ENCODE measurements at regions of chr2 and their contacts with region 1.

Region 1: DNA sequence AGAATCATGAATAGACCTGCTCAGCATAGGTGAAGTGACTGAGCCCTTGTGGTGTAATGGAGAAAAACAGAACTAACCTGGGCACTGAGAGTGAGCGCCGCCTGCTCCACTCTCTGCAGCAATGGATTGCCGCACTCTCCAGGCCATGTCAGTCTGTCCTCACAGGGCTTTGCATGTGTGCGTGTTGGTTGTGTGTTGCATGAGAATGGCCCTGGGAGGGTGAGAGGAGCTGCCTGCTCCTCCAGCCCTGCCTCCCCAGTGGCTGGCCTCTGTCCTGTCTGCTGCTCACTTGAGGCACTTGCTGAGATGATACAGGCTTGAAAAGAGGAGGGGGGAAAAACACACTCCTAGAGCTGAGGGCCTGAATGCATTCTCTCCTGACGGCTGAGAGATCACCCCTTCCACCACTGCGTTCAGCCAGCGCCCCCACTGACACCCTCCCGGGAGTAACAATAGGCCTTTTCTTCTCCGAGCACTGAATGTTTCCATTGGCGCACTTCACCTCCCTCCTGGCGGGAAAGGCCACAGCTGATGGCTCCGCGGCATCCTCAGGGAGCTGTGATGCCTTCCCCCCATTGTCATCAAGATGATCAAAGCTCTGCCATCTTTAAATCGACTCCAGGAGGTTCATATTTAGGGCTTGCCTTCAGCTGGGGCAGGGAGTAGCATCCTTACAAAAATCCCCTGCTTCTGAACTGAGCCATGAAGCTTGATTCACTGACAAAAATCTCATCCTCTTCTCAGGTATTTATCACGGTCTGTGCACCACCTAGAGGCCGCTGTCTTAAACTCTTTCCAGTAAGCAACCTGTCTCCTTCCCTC is 49.9 kb upstream of the DAPL1 start:
- DNase-seq: peak in 2 of 3 donors; percentile 49 to 58
- ATAC-seq: peak; percentile 81 to 88 (median 84)
- H3K4me3 ChIP-seq: no peak overlapping the region
- H3K27ac ChIP-seq: no peak overlapping the region
- H3K4me1 ChIP-seq: no peaks in the 10 kb centered on the region
- H3K27me3 ChIP-seq: no peaks in the 10 kb centered on the region
- CTCF ChIP-seq: peak; percentile 48 to 64 (median 59)
- POLR2A ChIP-seq: no peak

Region 2: GRCh38 chr2:158025255-158025996 is 719.8 kb before region 1 on chr2:
- intact Hi-C with region 1: loop called in 1 of 2 experiments (anchors 5 kb)
- DNase-seq: no peak
- ATAC-seq: peak in 2 of 4 donors; percentile 43 to 49
- H3K4me3 ChIP-seq: no peak overlapping the region
- H3K27ac ChIP-seq: no peak overlapping the region
- H3K4me1 ChIP-seq: no peaks in the 10 kb centered on the region
- H3K27me3 ChIP-seq: no peaks in the 10 kb centered on the region
- CTCF ChIP-seq: no peak
- POLR2A ChIP-seq: no peak

Region 3: GRCh38 chr2:158179660-158180059 is 565.6 kb before region 1 on chr2:
- intact Hi-C with region 1: loop called in 1 of 2 experiments (anchors 10 kb)
- DNase-seq: no peak
- ATAC-seq: peak; percentile 62 to 77 (median 71)
- H3K4me3 ChIP-seq: no peak overlapping the region
- H3K27ac ChIP-seq: no peak overlapping the region
- H3K4me1 ChIP-seq: no peaks in the 10 kb centered on the region
- H3K27me3 ChIP-seq: no peaks in the 10 kb centered on the region
- CTCF ChIP-seq: peak; percentile 38 to 50 (median 44)
- POLR2A ChIP-seq: no peak

Region 4: DNA sequence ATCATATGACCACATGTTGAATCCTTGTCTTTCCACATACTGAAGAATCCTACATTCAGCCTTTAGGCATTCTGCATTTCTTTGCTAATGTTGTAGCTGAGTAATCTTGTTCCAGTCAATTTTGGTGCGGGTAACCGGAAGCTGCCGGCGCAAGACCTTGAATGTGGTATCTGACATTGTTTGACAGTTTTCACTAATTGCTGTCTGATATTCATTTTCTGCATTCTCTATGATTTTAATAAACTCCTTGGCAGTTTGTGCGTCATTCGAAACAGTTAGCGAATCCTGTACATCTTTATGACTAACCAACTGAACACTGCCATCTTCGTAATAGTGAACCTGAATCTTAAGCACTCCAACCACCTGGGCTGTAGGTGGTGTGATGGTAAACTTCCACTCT is 717.1 kb after region 1 on chr2:
- intact Hi-C with region 1: no loop called
- DNase-seq: no peak
- ATAC-seq: no peak
- H3K4me3 ChIP-seq: no peak overlapping the region
- H3K27ac ChIP-seq: no peak overlapping the region
- H3K4me1 ChIP-seq: no peaks in the 10 kb centered on the region
- H3K27me3 ChIP-seq: no peaks in the 10 kb centered on the region
- CTCF ChIP-seq: no peak
- POLR2A ChIP-seq: no peak

Measured in right lobe of liver (tissue), 6 donors.